ENCODE measurements at regions of chr16 and their contacts with region 1.

Region 1: DNA sequence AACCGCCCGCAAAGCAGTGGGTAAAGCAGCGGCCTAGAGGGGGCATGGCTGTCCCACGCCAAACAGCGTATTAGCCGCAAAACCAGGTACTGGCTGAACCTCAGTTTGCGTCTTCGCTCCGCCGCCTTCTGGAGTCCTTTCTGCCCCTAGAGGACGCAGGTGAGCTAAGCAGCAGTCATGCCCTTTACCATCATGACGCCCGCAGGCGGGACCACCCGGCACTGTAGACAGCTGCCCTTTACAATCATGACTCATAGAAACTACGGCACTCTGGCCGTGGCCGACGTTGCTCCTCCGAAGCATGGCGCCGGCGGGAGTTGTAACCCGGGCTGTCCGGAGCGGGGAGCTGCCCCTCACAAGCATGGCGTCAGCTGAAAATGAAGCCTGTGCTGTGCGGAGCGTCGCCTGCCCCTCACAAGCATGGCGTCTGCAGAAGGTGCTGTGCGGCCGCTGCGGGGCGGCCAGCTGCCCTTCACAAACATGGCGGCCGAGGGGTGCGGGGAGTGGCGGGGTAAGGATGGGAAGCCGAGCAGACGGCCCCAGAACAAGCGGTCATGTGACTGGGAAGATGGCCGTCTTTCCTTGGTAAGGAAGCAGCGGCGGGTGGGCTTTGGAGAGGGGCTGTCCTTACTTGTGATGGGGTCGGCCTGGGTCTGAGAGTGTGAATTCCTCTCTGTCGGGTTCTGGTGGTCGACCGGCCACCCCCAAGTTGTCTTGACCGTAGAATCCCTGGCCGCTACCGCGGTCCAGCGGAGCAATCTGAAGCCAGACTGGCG is at the start of gene VPS35L:
- DNase-seq: peak; percentile 92 to 97 (median 95)
- ATAC-seq: peak; percentile 98
- H3K4me3 ChIP-seq: peak within 1 kb of the TSS; percentile 86
- H3K4me3 Mint-ChIP-seq: peak within 1 kb of the TSS; percentile 91 to 100 (median 97)
- H3K27ac ChIP-seq: peak within 1 kb of the TSS; percentile 78
- H3K27ac Mint-ChIP-seq: peak within 1 kb of the TSS; percentile 92 to 98 (median 95)
- H3K4me1 ChIP-seq: peaks cover 4 to 13% of the 10 kb centered on the region in 2 donors
- H3K4me1 Mint-ChIP-seq: peaks cover 0 to 30% (median 24%) of the 10 kb centered on the region in 7 donors
- H3K27me3 ChIP-seq: no peaks in the 10 kb centered on the region
- H3K27me3 Mint-ChIP-seq: no peaks in the 10 kb centered on the region
- total RNA-seq, gene VPS35L: 38.6 to 51.1 (median 46.6) TPM

Region 2: DNA sequence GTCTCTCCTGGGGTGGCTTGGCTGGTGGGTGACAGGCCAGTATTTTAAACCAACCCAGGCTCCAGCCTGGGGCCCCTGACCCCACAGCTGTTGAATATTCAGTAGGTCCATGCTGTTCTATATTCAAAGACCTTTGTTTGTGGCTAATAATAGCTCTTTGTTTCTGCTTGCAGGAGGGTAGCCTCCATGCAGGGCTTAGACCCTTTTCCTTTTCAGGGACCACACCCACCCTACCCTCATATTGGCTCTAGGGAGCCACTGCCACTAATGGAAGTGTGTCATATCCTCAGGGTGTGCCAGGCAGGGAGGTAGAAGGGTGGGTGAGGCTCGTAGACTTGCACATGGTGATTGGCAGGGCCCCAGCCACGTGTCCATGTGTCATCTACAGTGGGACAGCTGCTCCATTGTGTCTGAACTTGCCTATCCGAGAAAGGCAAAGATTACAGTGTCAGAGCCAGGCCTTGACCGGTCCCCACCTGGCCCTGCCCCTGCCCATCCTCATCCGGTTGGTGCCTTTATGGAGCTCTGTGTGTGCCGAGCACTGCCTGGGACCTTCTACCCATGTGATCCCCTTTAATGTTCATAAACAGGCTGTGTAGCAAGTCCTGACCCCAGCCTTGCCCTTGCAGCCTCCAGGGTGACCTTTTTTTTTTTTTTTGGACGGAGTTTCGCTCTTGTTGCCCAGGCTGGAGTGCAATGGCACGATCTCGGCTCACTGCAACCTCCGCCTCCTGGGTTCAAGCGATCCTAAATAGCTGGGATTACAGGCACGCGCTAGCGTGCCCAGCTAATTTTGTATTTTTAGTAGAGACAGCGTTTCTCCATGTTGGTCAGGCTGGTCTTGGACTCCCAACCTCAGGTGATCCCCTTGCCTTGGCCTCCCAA is 549.5 kb before region 1 on chr16:
- CTCF ChIA-PET with region 1: no interaction called
- POLR2A ChIA-PET with region 1: no interaction called
- intact Hi-C with region 1: no loop called
- DNase-seq: no peak
- ATAC-seq: no peak
- H3K4me3 ChIP-seq: no peak overlapping the region
- H3K4me3 Mint-ChIP-seq: no peak overlapping the region
- H3K27ac ChIP-seq: no peak overlapping the region
- H3K27ac Mint-ChIP-seq: no peak overlapping the region
- H3K4me1 ChIP-seq: no peaks in the 10 kb centered on the region
- H3K4me1 Mint-ChIP-seq: peaks cover 0 to 3% (median 0%) of the 10 kb centered on the region in 7 donors
- H3K27me3 ChIP-seq: no peaks in the 10 kb centered on the region
- H3K27me3 Mint-ChIP-seq: peaks cover 0 to 4% (median 0%) of the 10 kb centered on the region in 5 donors

Region 3: DNA sequence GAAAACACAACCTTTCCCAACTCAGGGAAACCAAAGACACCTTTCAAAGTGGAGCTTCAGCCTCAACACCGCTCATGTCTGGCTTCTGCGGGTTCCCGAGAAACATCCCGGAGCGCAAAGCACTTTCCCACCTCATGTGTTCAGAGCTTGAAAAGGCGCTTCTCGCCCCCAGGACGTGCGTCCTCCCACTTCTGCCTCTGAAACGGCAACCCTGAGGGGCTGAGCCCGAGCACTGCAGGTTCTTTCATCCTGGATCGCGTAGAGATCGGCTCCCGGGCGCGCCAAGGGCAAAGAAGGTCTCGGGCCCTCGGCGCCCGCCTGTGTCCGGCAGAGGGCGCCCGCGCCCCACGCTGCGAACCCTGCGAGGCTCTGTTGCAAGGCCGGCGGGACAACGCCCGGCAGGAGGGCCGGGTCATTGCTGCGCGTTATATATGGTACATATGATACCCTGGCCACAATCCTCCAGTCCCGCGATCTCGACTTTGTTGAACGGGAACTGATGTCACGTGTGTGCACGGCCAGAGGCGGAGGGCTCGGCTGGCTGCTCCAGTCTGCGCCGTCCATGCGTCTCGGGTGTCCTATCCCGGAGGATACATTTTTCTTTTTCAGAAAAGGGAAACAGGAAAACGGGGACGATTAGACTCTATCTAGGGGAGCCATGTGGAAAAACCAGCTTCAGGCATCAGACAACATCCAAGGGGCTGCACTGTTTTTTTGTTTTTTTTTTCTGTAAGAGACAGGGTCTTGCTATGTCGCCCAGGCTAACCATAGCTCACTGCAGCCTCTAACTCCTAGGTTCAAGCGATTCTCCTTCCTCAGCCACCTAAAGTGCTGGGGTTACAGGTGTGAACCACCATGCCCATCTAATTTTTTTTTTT is 468.8 kb before region 1 on chr16:
- CTCF ChIA-PET with region 1: no interaction called
- POLR2A ChIA-PET with region 1: no interaction called
- intact Hi-C with region 1: loop called in 1 of 2 experiments (anchors 5 kb)
- DNase-seq: peak; percentile 44 to 90 (median 71)
- ATAC-seq: peak; percentile 96
- H3K4me3 ChIP-seq: peak overlapping the region; percentile 36
- H3K4me3 Mint-ChIP-seq: peak overlapping the region; percentile 40 to 81 (median 69)
- H3K27ac ChIP-seq: no peak overlapping the region
- H3K27ac Mint-ChIP-seq: peak overlapping the region in 2 of 9 donors; percentile 31 to 77
- H3K4me1 ChIP-seq: peaks cover 4 to 10% of the 10 kb centered on the region in 2 donors
- H3K4me1 Mint-ChIP-seq: peaks cover 0 to 7% (median 0%) of the 10 kb centered on the region in 7 donors
- H3K27me3 ChIP-seq: no peaks in the 10 kb centered on the region
- H3K27me3 Mint-ChIP-seq: peaks cover 0 to 14% (median 6%) of the 10 kb centered on the region in 5 donors

Region 4: DNA sequence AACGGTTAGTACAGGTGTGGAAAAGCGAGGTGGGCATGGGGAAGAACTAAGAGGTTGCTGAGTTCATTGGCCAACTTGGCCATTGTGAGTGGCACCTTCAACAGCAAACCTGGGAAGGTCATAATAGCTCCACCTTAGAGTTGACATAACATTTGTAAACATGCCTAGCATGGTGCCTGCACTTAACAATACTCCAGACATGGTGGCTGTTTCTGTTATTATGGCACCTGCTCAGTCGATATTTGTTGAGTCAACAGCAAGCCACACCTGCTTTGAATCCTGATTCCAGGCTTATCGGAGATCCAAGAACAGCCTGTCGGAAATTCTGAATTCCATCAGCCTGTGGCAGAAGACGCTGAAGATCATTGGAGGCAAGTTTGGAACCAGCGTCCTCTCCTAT is 91.9 kb before region 1 on chr16:
- CTCF ChIA-PET with region 1: no interaction called
- POLR2A ChIA-PET with region 1: no interaction called
- intact Hi-C with region 1: no loop called
- DNase-seq: no peak
- ATAC-seq: no peak
- H3K4me3 ChIP-seq: no peak overlapping the region
- H3K4me3 Mint-ChIP-seq: no peak overlapping the region
- H3K27ac ChIP-seq: no peak overlapping the region
- H3K27ac Mint-ChIP-seq: no peak overlapping the region
- H3K4me1 ChIP-seq: no peaks in the 10 kb centered on the region
- H3K4me1 Mint-ChIP-seq: peaks cover 0 to 4% (median 0%) of the 10 kb centered on the region in 7 donors
- H3K27me3 ChIP-seq: no peaks in the 10 kb centered on the region
- H3K27me3 Mint-ChIP-seq: peaks cover 0 to 9% (median 5%) of the 10 kb centered on the region in 5 donors

Region 5: DNA sequence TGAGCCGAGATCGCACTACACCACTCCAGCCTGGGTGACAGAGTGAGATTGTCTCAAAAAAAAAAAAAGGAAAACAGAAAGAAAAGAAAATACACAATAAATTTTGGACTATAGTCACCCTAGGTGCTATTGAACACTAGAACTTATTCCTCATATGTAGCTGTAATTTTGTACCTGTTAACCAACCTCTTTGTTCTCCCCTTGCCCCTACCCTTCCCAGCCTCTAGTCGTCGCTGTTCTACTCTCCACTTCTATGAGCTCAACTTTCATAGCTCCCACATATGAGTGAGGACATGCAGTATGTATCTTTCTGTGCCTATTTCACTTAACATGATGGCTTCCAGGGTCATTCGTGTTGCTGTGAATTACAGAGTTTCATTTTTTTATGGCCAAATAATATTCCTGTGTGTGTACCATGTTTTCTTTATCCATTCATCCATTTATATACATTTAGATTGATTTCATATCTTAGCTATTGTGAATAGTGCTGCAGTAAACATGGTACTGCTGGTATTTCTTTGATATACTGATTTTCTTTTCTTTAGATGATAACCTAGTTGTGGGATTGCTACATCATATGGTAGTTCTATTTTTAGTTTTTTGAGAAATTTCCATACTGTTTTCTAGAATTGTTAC is 28.4 kb after region 1 on chr16:
- CTCF ChIA-PET with region 1: interaction called, 3 read pairs
- POLR2A ChIA-PET with region 1: interaction called, 4 read pairs
- intact Hi-C with region 1: loop called (anchors 1 kb)
- DNase-seq: peak in 5 of 9 donors; percentile 25 to 47 (median 31)
- ATAC-seq: peak; percentile 81
- H3K4me3 ChIP-seq: no peak overlapping the region
- H3K4me3 Mint-ChIP-seq: no peak overlapping the region
- H3K27ac ChIP-seq: no peak overlapping the region
- H3K27ac Mint-ChIP-seq: no peak overlapping the region
- H3K4me1 ChIP-seq: no peaks in the 10 kb centered on the region
- H3K4me1 Mint-ChIP-seq: no peaks in the 10 kb centered on the region
- H3K27me3 ChIP-seq: no peaks in the 10 kb centered on the region
- H3K27me3 Mint-ChIP-seq: no peaks in the 10 kb centered on the region

Region 6: DNA sequence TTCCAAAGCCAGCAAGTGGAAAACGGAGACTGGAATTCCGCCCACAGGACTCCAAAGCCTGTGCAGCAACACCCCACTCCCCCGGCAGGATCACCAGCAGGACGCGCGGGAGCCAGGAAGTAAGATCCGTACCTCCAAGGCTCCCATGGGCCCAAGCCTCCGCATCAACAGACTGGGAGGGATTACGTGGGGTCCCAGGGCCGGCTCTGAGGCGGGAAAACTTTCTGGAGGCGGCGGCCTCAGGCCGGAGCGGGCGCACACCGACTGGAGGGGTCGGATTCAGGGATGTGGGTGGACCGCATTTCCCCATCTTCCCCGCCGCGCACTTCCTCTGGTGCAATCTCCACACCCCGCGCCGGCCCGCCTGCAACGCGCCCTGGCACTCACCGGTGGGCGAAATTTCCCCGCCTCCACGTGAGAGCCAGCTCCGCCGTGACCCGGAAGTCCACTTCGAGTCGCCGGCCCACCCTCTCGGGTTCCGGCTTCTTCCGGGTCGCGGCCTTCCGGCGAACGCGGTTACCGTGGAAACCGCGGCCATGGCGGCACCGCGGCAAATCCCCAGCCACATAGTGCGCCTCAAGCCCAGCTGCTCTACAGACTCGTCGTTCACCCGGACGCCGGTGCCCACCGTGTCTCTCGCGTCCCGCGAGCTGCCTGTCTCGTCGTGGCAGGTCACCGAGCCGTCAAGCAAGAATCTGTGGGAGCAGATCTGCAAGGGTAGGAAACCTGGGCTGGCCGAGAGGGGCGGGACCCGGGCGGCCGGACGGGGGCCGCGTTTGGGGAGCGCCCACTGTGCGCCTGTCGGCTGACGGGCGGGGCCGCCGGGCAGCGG is 162.6 kb after region 1 on chr16 and contains the starts of genes IQCK and KNOP1:
- CTCF ChIA-PET with region 1: interaction called, 5 read pairs
- POLR2A ChIA-PET with region 1: no interaction called
- intact Hi-C with region 1: loop called (anchors 1 kb)
- DNase-seq: peak; percentile 79 to 92 (median 87)
- ATAC-seq: peak; percentile 97
- H3K4me3 ChIP-seq: peak within 1 kb of the TSS; percentile 90
- H3K4me3 Mint-ChIP-seq: peak within 1 kb of the TSS; percentile 90 to 97 (median 95)
- H3K27ac ChIP-seq: peak within 1 kb of the TSS; percentile 77
- H3K27ac Mint-ChIP-seq: peak within 1 kb of the TSS; percentile 63 to 89 (median 83)
- H3K4me1 ChIP-seq: peaks cover 0 to 7% of the 10 kb centered on the region in 2 donors
- H3K4me1 Mint-ChIP-seq: peaks cover 16 to 62% (median 48%) of the 10 kb centered on the region in 7 donors
- H3K27me3 ChIP-seq: no peaks in the 10 kb centered on the region
- H3K27me3 Mint-ChIP-seq: no peaks in the 10 kb centered on the region
- total RNA-seq, gene IQCK: 0.48 to 4.1 (median 2.6) TPM
- total RNA-seq, gene KNOP1: 6.4 to 20.6 (median 18.5) TPM

Region 7: DNA sequence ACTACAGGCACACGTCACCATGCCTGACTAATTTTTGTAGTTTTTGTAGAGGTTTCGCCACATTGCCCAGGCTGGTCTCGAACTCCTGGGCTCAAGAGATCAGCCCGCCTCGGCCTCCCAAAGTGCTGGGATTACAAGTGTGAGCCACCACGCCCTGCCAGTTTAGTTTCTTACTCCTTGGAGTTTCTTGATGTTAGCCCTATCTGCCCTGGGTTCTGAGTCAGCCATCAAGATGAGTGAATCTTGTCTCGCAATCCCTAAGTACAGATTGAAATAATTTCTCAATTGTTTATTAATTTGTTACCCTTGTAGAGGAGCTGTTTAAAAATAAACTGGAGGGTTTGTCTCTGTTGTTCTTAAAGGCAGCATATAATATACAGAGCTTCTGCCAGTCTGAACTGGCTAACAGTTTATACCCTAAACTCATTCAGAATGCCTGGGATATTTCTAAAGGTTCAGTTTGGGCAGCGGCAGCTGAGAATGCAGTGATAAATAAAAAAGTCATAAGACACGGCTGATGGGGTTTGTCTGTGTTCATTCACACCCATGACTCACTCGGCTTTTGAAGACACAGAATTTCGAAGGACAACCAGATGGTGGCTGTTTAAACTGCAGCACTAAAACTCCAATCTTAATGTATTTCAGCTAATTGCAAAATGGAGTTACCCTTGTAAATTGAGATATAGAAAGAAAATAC is 289.7 kb after region 1 on chr16:
- CTCF ChIA-PET with region 1: no interaction called
- POLR2A ChIA-PET with region 1: no interaction called
- intact Hi-C with region 1: no loop called
- DNase-seq: no peak
- ATAC-seq: no peak
- H3K4me3 ChIP-seq: no peak overlapping the region
- H3K4me3 Mint-ChIP-seq: no peak overlapping the region
- H3K27ac ChIP-seq: no peak overlapping the region
- H3K27ac Mint-ChIP-seq: no peak overlapping the region
- H3K4me1 ChIP-seq: no peaks in the 10 kb centered on the region
- H3K4me1 Mint-ChIP-seq: no peaks in the 10 kb centered on the region
- H3K27me3 ChIP-seq: no peaks in the 10 kb centered on the region
- H3K27me3 Mint-ChIP-seq: no peaks in the 10 kb centered on the region

Region 8: DNA sequence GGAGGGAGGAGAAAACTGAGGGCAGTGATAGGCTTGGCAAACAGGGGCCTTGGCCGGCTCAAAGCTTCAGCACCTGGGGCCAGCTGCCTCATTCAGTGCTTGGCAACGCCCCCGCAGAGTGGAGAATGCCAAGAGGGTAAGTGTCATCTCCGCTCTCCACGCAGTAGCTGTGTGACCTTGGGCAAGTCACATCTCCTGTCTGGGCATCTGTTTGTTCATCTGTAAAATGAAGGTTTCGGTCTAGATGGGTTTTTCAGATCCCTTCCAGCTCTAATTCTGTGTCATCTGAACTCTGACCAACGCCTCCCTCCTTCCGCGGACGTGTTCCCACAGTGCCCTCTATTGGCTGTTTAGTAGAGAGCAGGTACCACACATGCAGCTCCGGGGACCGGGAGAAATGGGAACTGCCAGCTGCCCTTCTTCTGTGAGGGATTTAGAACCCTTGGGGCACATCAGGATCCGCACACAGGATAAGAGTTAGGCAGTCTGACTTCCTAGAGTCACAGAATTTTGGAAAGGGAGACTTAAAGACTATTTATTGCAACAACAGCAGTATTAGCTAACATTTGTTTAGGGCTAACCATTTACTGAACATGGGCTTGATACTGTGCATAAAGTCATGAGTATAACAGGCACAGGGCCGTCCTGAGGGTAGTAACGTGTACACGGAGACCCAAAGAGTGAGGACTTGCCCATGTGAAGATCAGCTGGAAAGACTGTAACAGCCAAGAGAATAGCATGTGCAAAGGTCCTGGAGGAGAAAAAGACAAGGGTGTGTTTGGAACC is 745.2 kb after region 1 on chr16:
- CTCF ChIA-PET with region 1: no interaction called
- POLR2A ChIA-PET with region 1: no interaction called
- intact Hi-C with region 1: loop called in 1 of 2 experiments (anchors 5 kb)
- DNase-seq: peak in 6 of 9 donors; percentile 3 to 33 (median 6)
- ATAC-seq: peak; percentile 47
- H3K4me3 ChIP-seq: no peak overlapping the region
- H3K4me3 Mint-ChIP-seq: no peak overlapping the region
- H3K27ac ChIP-seq: no peak overlapping the region
- H3K27ac Mint-ChIP-seq: no peak overlapping the region
- H3K4me1 ChIP-seq: no peaks in the 10 kb centered on the region
- H3K4me1 Mint-ChIP-seq: no peaks in the 10 kb centered on the region
- H3K27me3 ChIP-seq: no peaks in the 10 kb centered on the region
- H3K27me3 Mint-ChIP-seq: peaks cover 0 to 38% (median 22%) of the 10 kb centered on the region in 5 donors

Region 9: GRCh38 chr16:20741554-20742285 is 1186.4 kb after region 1 on chr16 and contains the start of gene THUMPD1:
- CTCF ChIA-PET with region 1: no interaction called
- POLR2A ChIA-PET with region 1: no interaction called
- intact Hi-C with region 1: loop called in 1 of 2 experiments (anchors 1 kb)
- DNase-seq: peak; percentile 88 to 97 (median 95)
- ATAC-seq: peak; percentile 97
- H3K4me3 ChIP-seq: peak within 1 kb of the TSS; percentile 100
- H3K4me3 Mint-ChIP-seq: peak within 1 kb of the TSS; percentile 93 to 98 (median 96)
- H3K27ac ChIP-seq: peak within 1 kb of the TSS; percentile 93
- H3K27ac Mint-ChIP-seq: peak within 1 kb of the TSS; percentile 90 to 99 (median 98)
- H3K4me1 ChIP-seq: peaks cover 12 to 25% of the 10 kb centered on the region in 2 donors
- H3K4me1 Mint-ChIP-seq: peaks cover 10 to 35% (median 26%) of the 10 kb centered on the region in 7 donors
- H3K27me3 ChIP-seq: no peaks in the 10 kb centered on the region
- H3K27me3 Mint-ChIP-seq: peaks cover 0 to 2% (median 0%) of the 10 kb centered on the region in 5 donors
- total RNA-seq, gene THUMPD1: 41.9 to 107 (median 72.5) TPM